ENCODE measurements at regions of chr9 and their contacts with region 1.

Region 1: DNA sequence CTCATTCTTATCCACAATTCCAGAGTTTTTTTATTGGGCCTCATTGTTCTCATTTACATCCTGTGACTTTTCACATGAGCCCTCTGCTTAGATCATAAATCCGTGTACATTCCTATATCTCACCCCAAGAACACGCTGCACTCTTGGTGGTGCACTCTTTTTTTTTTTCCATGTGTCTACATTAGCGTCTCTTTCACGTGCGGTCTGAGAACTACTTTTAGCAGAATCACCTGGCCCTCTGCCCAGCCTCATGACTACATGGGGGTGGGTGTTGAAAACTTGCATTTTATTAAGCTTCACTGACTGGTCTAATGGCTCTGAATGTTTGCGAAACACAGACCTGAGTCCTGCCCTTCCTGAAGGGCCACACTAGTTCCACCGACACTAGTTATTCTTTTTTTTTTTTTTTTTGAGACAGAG is 18.6 kb downstream of the C9orf57 start:
- DNase-seq: no peak
- H3K4me3 ChIP-seq: no peak overlapping the region
- H3K27ac ChIP-seq: peak overlapping the region; percentile 72
- H3K4me1 ChIP-seq: peaks cover 6% of the 10 kb centered on the region
- H3K27me3 ChIP-seq: no peaks in the 10 kb centered on the region
- CTCF ChIP-seq: no peak
- POLR2A ChIP-seq: no peak

Region 2: DNA sequence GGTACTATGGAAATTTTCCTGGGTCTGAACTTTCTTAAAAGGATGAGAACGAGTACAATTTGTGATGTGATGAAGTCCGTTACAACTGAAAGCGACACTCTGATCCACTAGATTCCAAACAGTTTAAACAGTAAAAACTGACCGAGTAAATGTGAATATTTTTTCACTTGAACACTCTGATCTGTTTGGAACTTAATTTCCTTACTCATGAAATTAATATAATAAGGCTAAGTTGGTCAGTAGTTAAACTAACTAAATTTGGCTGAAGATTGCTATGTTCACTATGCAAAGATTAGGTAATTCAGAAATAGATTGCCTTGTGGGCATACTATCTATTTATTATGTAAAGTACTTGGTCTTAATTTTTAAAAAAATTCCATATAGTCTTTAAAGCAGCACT is 18.7 kb after region 1 on chr9 and contains the start of gene C9orf57:
- intact Hi-C with region 1: loop called (anchors 1 kb)
- DNase-seq: no peak
- H3K4me3 ChIP-seq: no peak within 1 kb of the TSS
- H3K27ac ChIP-seq: no peak within 1 kb of the TSS
- H3K4me1 ChIP-seq: no peaks in the 10 kb centered on the region
- H3K27me3 ChIP-seq: no peaks in the 10 kb centered on the region
- CTCF ChIP-seq: no peak
- POLR2A ChIP-seq: no peak
- total RNA-seq, gene C9orf57: not detected

Region 3: GRCh38 chr9:72271613-72272478 is 230.1 kb after region 1 on chr9:
- intact Hi-C with region 1: loop called (anchors 10 kb)
- DNase-seq: no peak
- H3K4me3 ChIP-seq: no peak overlapping the region
- H3K27ac ChIP-seq: no peak overlapping the region
- H3K4me1 ChIP-seq: peaks cover 5% of the 10 kb centered on the region
- H3K27me3 ChIP-seq: no peaks in the 10 kb centered on the region
- CTCF ChIP-seq: peak; percentile 67 to 79 (median 77)
- POLR2A ChIP-seq: no peak

Measured in vagina (tissue), 2 donors.